Ascending aorta (tissue), 2 donors: ENCODE measurements at regions of chr3 and their contacts with region 1.

Region 1: GRCh38 chr3:97821810-97822775 is at the start of gene CRYBG3:
- DNase-seq: peak; percentile 27 to 86
- H3K4me3 ChIP-seq: peak within 1 kb of the TSS; percentile 65 to 94
- H3K27ac ChIP-seq: peak within 1 kb of the TSS; percentile 76 to 92
- H3K4me1 ChIP-seq: peaks cover 0 to 3% of the 10 kb centered on the region in 2 donors
- H3K27me3 ChIP-seq: no peaks in the 10 kb centered on the region
- CTCF ChIP-seq: peak in 2 of 3 experiments; percentile 24 to 34
- total RNA-seq, gene CRYBG3: 13.2 TPM

Region 2: GRCh38 chr3:97764407-97765238 is 57.5 kb before region 1 on chr3 and contains the start of gene ARL6:
- intact Hi-C with region 1: loop called (anchors 2 kb)
- DNase-seq: peak; percentile 22 to 88
- H3K4me3 ChIP-seq: peak within 1 kb of the TSS; percentile 72 to 86
- H3K27ac ChIP-seq: peak within 1 kb of the TSS; percentile 51 to 70
- H3K4me1 ChIP-seq: peaks cover 0 to 5% of the 10 kb centered on the region in 2 donors
- H3K27me3 ChIP-seq: no peaks in the 10 kb centered on the region
- CTCF ChIP-seq: no peak
- total RNA-seq, gene ARL6: 18.5 TPM

Region 3: DNA sequence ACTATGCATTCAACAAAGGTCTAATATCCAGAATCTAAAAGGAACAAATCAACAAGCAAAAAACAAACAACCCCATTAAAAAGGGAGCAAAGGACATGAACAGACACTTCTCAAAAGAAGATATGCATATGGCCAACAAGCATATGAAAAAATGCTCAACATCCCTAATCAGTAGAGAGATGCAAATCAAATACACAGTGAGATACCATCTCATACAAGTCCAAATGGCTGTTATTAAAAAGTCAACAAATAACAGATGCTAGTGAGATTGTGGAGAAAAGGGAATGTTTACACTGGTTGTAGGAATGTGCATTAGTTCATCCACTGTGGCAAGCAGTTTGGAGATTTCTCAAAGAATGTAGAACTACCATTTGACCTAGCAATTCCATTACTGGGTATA is 105.6 kb after region 1 on chr3:
- intact Hi-C with region 1: no loop called
- DNase-seq: no peak
- H3K4me3 ChIP-seq: no peak overlapping the region
- H3K27ac ChIP-seq: no peak overlapping the region
- H3K4me1 ChIP-seq: no peaks in the 10 kb centered on the region
- H3K27me3 ChIP-seq: no peaks in the 10 kb centered on the region
- CTCF ChIP-seq: no peak

Region 4: GRCh38 chr3:97971677-97972567 is 149.8 kb after region 1 on chr3 and contains the start of gene RIOX2:
- intact Hi-C with region 1: loop called (anchors 1 kb)
- DNase-seq: peak; percentile 24 to 82
- H3K4me3 ChIP-seq: peak within 1 kb of the TSS; percentile 78 to 89
- H3K27ac ChIP-seq: peak within 1 kb of the TSS; percentile 87 to 88
- H3K4me1 ChIP-seq: peaks cover 0 to 8% of the 10 kb centered on the region in 2 donors
- H3K27me3 ChIP-seq: no peaks in the 10 kb centered on the region
- CTCF ChIP-seq: peak in 1 of 3 experiments; percentile 21
- total RNA-seq, gene RIOX2: 21.3 TPM

Region 5: GRCh38 chr3:98522244-98523090 is 700.4 kb after region 1 on chr3 and contains the start of gene CLDND1:
- intact Hi-C with region 1: loop called (anchors 10 kb)
- DNase-seq: peak; percentile 95 to 99
- H3K4me3 ChIP-seq: peak within 1 kb of the TSS; percentile 75 to 93
- H3K27ac ChIP-seq: peak within 1 kb of the TSS; percentile 92 to 95
- H3K4me1 ChIP-seq: peaks cover 0 to 2% of the 10 kb centered on the region in 2 donors
- H3K27me3 ChIP-seq: no peaks in the 10 kb centered on the region
- CTCF ChIP-seq: no peak
- total RNA-seq, gene CLDND1: 171 TPM